ENCODE measurements at regions of chr2 and their contacts with region 1.

Region 1: GRCh38 chr2:27095745-27096651 is 9.4 kb downstream of the KHK start:
- DNase-seq: no peak
- H3K4me3 ChIP-seq: peak overlapping the region; percentile 23
- CTCF ChIP-seq: no peak

Region 2: GRCh38 chr2:26740890-26741302 is 355.1 kb before region 1 on chr2:
- CTCF ChIA-PET with region 1: no interaction called
- POLR2A ChIA-PET with region 1: no interaction called
- DNase-seq: no peak
- H3K4me3 ChIP-seq: no peak overlapping the region
- CTCF ChIP-seq: no peak

Region 3: DNA sequence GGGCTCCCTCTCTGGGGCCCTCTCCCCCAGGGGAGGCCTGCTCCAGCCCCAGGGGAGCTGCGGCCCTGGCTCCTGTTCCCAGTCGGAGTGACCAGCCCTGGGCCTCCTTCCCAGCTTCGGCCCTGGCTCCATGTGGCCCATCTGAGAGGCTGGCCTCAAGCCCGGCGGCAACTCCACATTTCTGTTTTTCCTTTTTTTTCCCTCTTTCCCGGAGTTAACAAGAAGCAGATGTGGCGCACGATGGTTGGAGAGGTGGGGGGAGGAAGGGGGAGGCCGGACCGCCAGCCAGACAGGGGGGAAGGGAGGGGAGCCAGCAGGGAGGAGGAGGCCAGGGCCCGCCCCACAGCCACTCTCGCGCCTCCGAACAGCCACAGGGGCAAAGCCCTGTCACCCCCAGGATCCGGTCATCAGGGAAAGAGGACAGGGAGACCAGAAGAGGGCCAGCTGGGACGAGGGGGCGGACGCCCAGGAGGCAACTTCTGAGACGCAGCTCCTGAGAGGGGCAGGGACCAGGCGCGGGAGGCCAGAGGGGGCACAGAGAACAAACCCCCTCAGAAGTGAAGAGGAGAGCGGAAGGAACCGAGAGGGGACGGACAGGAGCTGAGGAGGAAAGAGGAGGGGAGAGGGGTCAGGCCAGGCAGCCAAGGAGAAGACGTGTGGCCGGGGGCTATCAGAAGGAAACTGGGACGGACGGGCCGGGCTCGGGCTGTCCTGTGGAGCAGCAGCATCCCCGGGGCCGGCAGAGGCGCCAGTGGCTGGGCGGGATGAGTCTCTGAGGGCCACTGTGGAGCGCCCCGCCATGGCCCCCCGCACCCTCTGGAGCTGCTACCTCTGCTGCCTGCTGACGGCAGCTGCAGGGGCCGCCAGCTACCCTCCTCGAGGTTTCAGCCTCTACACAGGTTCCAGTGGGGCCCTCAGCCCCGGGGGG is 17.5 kb before region 1 on chr2 and contains the start of gene EMILIN1:
- CTCF ChIA-PET with region 1: interaction called, 30 read pairs
- POLR2A ChIA-PET with region 1: interaction called, 3 read pairs
- DNase-seq: peak; percentile 83
- H3K4me3 ChIP-seq: peak within 1 kb of the TSS; percentile 95
- CTCF ChIP-seq: peak; percentile 8

Region 4: DNA sequence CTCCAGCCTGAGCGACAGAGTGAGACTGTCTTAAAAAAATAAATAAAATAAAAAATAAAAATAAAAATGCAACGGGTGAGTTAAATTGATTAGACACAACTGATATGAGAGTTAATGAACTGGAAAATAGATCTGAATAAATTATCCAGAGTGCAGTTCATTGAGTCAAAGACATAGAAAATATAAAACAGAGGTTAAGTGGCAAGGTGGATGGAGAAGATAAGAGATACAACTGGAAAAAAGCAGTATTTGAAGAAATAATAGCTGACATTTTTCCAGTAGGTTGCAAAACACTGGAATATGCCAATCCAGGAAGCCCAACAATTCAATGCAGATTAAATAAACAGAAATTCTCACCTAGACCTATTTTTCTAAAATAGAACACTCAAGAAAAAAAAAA is 12.2 kb after region 1 on chr2:
- CTCF ChIA-PET with region 1: interaction called, 34 read pairs
- POLR2A ChIA-PET with region 1: no interaction called
- DNase-seq: no peak
- H3K4me3 ChIP-seq: no peak overlapping the region
- CTCF ChIP-seq: no peak

Region 5: DNA sequence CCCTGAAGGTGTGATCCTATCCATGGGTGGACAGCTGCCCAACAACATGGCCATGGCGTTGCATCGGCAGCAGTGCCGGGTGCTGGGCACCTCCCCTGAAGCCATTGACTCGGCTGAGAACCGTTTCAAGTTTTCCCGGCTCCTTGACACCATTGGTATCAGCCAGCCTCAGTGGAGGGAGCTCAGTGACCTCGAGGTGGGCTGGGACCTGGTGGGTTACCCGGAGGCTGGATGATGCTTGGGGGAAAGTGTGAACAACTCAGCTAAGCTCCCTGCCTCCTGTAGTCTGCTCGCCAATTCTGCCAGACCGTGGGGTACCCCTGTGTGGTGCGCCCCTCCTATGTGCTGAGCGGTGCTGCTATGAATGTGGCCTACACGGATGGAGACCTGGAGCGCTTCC is 137.3 kb after region 1 on chr2:
- CTCF ChIA-PET with region 1: interaction called, 20 read pairs
- POLR2A ChIA-PET with region 1: no interaction called
- DNase-seq: no peak
- H3K4me3 ChIP-seq: no peak overlapping the region
- CTCF ChIP-seq: no peak

Region 6: GRCh38 chr2:27271631-27272340 is 175.8 kb after region 1 on chr2:
- CTCF ChIA-PET with region 1: interaction called, 206 read pairs
- POLR2A ChIA-PET with region 1: no interaction called
- DNase-seq: no peak
- H3K4me3 ChIP-seq: no peak overlapping the region
- CTCF ChIP-seq: no peak

Region 7: DNA sequence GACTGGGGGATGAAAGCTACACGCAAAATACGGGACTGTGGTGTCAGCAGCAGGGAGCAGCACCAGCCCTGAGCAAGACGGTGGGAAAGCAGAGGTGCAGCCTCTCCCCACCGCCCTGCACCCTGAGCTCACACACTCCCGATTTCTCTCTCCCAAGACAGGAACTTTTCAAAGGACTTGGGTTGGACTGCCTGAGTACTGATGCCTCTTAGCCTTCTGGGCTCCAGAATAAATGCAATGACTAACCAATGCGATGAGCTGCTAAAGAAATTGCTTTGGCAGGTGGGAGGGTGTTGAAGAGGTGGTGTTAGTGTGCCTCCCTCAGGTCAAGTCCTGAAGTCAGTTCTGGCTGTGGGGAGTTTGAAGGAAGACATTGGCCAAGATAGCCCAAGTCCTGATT is 195.9 kb after region 1 on chr2:
- CTCF ChIA-PET with region 1: interaction called, 11 read pairs
- POLR2A ChIA-PET with region 1: no interaction called
- DNase-seq: no peak
- H3K4me3 ChIP-seq: no peak overlapping the region
- CTCF ChIP-seq: no peak

Measured in AG04449 (cell line).